ENCODE measurements at regions of chr7 and their contacts with region 1.

Region 1: GRCh38 chr7:149580328-149580727 is 82.7 kb upstream of the ZNF746 start:
- DNase-seq: no peak
- ATAC-seq: no peak
- H3K4me3 Mint-ChIP-seq: no peak overlapping the region
- H3K27ac Mint-ChIP-seq: no peak overlapping the region
- H3K4me1 Mint-ChIP-seq: peaks cover 15% of the 10 kb centered on the region
- H3K27me3 Mint-ChIP-seq: no peaks in the 10 kb centered on the region

Region 2: GRCh38 chr7:149529136-149529718 is 51.1 kb before region 1 on chr7:
- CTCF ChIA-PET with region 1: no interaction called
- POLR2A ChIA-PET with region 1: no interaction called
- intact Hi-C with region 1: no loop called
- DNase-seq: peak; percentile 11
- ATAC-seq: no peak
- H3K4me3 Mint-ChIP-seq: no peak overlapping the region
- H3K27ac Mint-ChIP-seq: no peak overlapping the region
- H3K4me1 Mint-ChIP-seq: no peaks in the 10 kb centered on the region
- H3K27me3 Mint-ChIP-seq: no peaks in the 10 kb centered on the region

Region 3: DNA sequence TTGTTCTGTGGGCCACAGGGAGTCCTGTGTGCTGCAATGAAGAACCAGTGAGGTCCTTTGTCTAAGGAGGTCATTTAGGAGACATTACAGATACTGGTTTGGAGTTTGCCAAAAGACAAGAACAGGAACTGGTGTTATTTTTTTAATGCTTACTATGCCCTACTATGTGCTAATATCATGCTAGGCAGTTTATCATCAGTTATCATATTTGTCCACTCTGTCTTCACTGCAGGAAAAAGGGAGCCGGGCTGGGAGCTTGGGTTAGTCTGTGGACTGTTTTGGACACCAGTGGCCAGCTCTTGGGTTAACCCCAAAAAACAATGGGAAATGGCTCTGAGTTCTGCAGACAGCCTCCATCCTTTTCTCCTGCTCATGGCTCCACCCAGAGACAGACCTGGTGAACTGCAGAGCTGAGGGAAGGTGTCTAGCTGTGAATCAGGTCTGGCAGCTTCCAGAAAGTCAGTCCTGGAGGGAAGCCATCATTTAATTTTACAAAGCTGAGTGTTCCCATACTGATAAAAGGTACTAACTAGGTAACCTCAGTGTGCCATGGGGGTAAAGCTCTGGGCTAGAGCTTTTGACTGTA is 18.5 kb after region 1 on chr7:
- CTCF ChIA-PET with region 1: interaction called, 3 read pairs
- POLR2A ChIA-PET with region 1: no interaction called
- intact Hi-C with region 1: loop called in 1 of 2 experiments (anchors 2 kb)
- DNase-seq: peak; percentile 65
- ATAC-seq: peak; percentile 38
- H3K4me3 Mint-ChIP-seq: no peak overlapping the region
- H3K27ac Mint-ChIP-seq: no peak overlapping the region
- H3K4me1 Mint-ChIP-seq: peaks cover 34% of the 10 kb centered on the region
- H3K27me3 Mint-ChIP-seq: no peaks in the 10 kb centered on the region

Measured in activated CD4-positive, alpha-beta T cell treated with anti-CD3 and anti-CD28 coated beads for 36 hours (primary cell).